CD8-positive, alpha-beta memory T cell (primary cell): ENCODE measurements at regions of chr16 and their contacts with region 1.

Region 1: GRCh38 chr16:67226804-67227557 is at the start of gene TMEM208:
- DNase-seq: peak; percentile 94 to 98 (median 96)
- H3K4me3 ChIP-seq: peak within 1 kb of the TSS; percentile 99
- H3K4me3 Mint-ChIP-seq: peak within 1 kb of the TSS; percentile 98 to 100 (median 99)
- H3K27ac ChIP-seq: peak within 1 kb of the TSS; percentile 94
- H3K27ac Mint-ChIP-seq: peak within 1 kb of the TSS; percentile 93 to 99 (median 98)
- H3K4me1 ChIP-seq: peaks cover 42% of the 10 kb centered on the region
- H3K4me1 Mint-ChIP-seq: peaks cover 39 to 60% (median 50%) of the 10 kb centered on the region in 3 donors
- H3K27me3 ChIP-seq: no peaks in the 10 kb centered on the region
- H3K27me3 Mint-ChIP-seq: peaks cover 0 to 2% of the 10 kb centered on the region in 2 donors
- total RNA-seq, gene TMEM208: 58.4 to 69.5 TPM

Region 2: DNA sequence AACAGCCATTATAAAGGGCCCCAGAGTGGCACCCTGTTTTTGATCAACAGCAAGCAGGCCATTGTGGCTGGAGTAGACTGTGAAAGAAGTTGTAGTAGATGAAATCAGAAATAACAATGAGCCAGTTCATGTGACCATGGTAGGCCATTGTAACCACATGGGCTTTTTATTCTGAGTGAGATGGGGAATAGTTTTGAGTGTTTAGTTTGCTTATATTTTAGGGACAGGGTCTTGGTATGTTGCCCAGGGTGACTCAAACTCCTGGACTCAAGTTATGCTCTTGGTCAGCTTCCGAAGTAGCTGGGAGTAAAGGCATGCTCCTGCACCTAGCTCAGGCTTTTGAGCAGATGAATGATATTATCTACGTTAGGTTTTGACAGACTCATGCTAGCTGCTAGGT is 186.1 kb before region 1 on chr16:
- CTCF ChIA-PET with region 1: no interaction called
- POLR2A ChIA-PET with region 1: no interaction called
- DNase-seq: no peak
- H3K4me3 ChIP-seq: no peak overlapping the region
- H3K4me3 Mint-ChIP-seq: peak overlapping the region in 1 of 7 donors; percentile 14
- H3K27ac ChIP-seq: no peak overlapping the region
- H3K27ac Mint-ChIP-seq: peak overlapping the region in 4 of 8 donors; percentile 5 to 68 (median 23)
- H3K4me1 ChIP-seq: peaks cover 4% of the 10 kb centered on the region
- H3K4me1 Mint-ChIP-seq: peaks cover 24 to 50% (median 49%) of the 10 kb centered on the region in 3 donors
- H3K27me3 ChIP-seq: no peaks in the 10 kb centered on the region
- H3K27me3 Mint-ChIP-seq: no peaks in the 10 kb centered on the region

Region 3: GRCh38 chr16:67246934-67247697 is 20.1 kb after region 1 on chr16 and contains the start of gene FHOD1:
- CTCF ChIA-PET with region 1: interaction called, 12 read pairs
- POLR2A ChIA-PET with region 1: interaction called, 15 read pairs
- DNase-seq: peak; percentile 90 to 97 (median 95)
- H3K4me3 ChIP-seq: peak within 1 kb of the TSS; percentile 73
- H3K4me3 Mint-ChIP-seq: peak within 1 kb of the TSS; percentile 82 to 97 (median 91)
- H3K27ac ChIP-seq: peak within 1 kb of the TSS; percentile 72
- H3K27ac Mint-ChIP-seq: peak within 1 kb of the TSS; percentile 67 to 97 (median 90)
- H3K4me1 ChIP-seq: peaks cover 48% of the 10 kb centered on the region
- H3K4me1 Mint-ChIP-seq: peaks cover 31 to 56% (median 52%) of the 10 kb centered on the region in 3 donors
- H3K27me3 ChIP-seq: no peaks in the 10 kb centered on the region
- H3K27me3 Mint-ChIP-seq: no peaks in the 10 kb centered on the region
- total RNA-seq, gene FHOD1: 111 to 117 TPM